Lower lobe of right lung (tissue), 2 donors: ENCODE measurements at regions of chr6 and their contacts with region 1.

Region 1: DNA sequence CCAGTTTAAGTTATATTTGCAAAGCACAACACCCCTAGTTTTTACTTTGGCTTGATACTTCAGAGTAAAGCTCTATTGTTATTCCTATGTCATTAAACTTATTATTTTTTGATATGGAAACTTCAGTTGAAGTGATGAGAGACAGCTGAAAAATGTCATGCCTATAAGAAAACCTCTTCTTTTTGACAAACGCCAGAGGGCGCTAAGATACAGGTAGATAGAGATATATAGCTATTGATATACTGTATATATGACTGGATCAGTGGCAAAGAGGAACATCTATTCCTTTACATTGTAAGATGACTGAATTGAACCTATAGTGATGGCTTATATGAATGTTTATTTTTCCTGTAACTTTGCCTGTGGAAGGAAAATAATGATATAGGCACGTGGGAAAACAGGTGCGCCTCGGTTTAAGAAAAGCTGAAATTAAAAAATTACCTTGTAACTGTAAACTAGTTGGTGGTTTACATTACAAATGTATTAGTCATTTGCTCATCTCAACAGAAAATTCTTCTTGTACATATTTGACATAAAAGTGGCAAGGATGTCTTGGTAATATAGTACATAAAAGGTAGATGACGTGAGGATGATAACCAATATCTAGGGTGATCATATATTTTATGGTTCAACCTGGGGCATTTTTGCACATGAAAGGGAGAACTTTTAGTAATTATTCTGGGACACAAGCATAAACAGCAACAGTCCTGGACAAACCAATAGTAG is 74.1 kb downstream of the LAMA4 start:
- DNase-seq: no peak
- ATAC-seq: peak; percentile 61 to 82
- H3K4me3 ChIP-seq: no peak overlapping the region
- H3K27ac ChIP-seq: no peak overlapping the region
- H3K4me1 ChIP-seq: no peaks in the 10 kb centered on the region
- H3K27me3 ChIP-seq: no peaks in the 10 kb centered on the region
- CTCF ChIP-seq: peak; percentile 77

Region 2: GRCh38 chr6:112122756-112123155 is 57.5 kb before region 1 on chr6:
- intact Hi-C with region 1: no loop called
- DNase-seq: no peak
- ATAC-seq: no peak
- H3K4me3 ChIP-seq: no peak overlapping the region
- H3K27ac ChIP-seq: no peak overlapping the region
- H3K4me1 ChIP-seq: no peaks in the 10 kb centered on the region
- H3K27me3 ChIP-seq: no peaks in the 10 kb centered on the region
- CTCF ChIP-seq: no peak

Region 3: DNA sequence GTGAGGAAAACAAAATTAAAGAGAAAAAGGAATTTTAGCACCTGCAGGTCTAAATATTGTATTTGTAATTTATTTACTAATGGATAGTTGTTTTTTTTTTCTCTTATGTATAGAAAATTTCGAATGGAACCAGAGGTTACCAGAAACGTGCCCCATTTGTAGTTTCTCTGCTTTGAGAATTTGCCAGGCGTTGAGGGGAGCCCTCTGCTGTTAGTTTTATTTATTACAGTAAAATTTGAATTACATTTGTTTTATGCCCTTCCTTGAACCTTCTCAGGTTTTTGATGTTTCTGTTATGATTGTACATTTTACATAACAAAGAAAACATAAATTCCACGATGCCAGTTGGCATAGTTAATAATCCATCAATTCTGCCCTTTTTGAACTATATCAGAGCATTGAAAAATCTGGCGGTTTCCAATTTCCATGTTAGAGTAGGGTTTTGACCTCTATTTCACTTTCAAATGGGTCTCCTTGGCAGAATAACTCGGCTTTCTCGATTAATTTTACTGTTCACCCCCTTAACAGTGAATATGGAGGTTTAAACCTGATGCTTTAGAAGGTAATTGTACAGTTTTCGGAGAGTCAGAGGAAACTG is 131.8 kb after region 1 on chr6:
- intact Hi-C with region 1: loop called (anchors 5 kb)
- DNase-seq: no peak
- ATAC-seq: no peak
- H3K4me3 ChIP-seq: no peak overlapping the region
- H3K27ac ChIP-seq: no peak overlapping the region
- H3K4me1 ChIP-seq: peaks cover 4% of the 10 kb centered on the region
- H3K27me3 ChIP-seq: no peaks in the 10 kb centered on the region
- CTCF ChIP-seq: peak; percentile 56

Region 4: GRCh38 chr6:112480553-112480952 is 300.3 kb after region 1 on chr6:
- intact Hi-C with region 1: no loop called
- DNase-seq: no peak
- ATAC-seq: no peak
- H3K4me3 ChIP-seq: no peak overlapping the region
- H3K27ac ChIP-seq: no peak overlapping the region
- H3K4me1 ChIP-seq: no peaks in the 10 kb centered on the region
- H3K27me3 ChIP-seq: no peaks in the 10 kb centered on the region
- CTCF ChIP-seq: no peak